ENCODE measurements at regions of chr17 and their contacts with region 1.

Region 1: GRCh38 chr17:7589204-7589868 is 558 bp downstream of the SOX15 start:
- DNase-seq: peak; percentile 71
- H3K4me3 Mint-ChIP-seq: no peak overlapping the region
- H3K27ac Mint-ChIP-seq: peak overlapping the region; percentile 26
- H3K4me1 Mint-ChIP-seq: peaks cover 22% of the 10 kb centered on the region
- H3K27me3 Mint-ChIP-seq: no peaks in the 10 kb centered on the region

Region 2: DNA sequence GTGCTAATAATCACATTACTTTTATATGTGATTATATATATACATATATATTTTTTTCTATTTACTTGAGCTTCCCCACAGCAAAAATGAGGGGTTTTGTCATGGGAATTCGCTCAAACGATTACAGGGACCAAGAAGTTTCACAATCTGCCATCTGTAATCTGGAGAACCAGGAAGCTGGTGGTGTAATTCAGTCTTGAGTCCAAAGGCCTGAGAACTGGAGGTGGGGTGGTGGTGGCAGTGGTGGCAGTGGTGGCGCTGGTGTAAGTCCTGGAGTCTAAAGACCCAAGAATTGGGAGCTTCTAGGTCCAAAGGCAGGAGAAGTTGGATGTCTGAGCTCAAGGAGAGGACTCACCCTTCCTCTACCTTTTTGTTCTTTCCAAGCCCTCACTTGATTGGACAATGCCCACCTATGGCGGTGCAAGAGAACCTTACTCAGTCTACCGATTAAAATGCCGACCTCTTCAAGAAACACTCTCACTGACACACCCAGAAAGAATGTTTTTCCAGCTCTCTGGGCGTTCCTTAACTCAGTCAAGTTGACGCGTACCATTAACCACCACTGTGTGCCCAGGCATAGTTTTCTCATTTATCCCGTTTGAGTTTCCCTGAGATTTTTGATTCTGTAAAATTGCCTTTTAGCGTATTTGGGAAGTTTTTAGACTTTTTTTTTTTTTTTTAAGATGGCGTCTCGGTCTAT is 73.3 kb before region 1 on chr17:
- CTCF ChIA-PET with region 1: interaction called, 24 read pairs
- POLR2A ChIA-PET with region 1: interaction called, 3 read pairs
- DNase-seq: no peak
- H3K4me3 Mint-ChIP-seq: no peak overlapping the region
- H3K27ac Mint-ChIP-seq: no peak overlapping the region
- H3K4me1 Mint-ChIP-seq: no peaks in the 10 kb centered on the region
- H3K27me3 Mint-ChIP-seq: no peaks in the 10 kb centered on the region

Region 3: DNA sequence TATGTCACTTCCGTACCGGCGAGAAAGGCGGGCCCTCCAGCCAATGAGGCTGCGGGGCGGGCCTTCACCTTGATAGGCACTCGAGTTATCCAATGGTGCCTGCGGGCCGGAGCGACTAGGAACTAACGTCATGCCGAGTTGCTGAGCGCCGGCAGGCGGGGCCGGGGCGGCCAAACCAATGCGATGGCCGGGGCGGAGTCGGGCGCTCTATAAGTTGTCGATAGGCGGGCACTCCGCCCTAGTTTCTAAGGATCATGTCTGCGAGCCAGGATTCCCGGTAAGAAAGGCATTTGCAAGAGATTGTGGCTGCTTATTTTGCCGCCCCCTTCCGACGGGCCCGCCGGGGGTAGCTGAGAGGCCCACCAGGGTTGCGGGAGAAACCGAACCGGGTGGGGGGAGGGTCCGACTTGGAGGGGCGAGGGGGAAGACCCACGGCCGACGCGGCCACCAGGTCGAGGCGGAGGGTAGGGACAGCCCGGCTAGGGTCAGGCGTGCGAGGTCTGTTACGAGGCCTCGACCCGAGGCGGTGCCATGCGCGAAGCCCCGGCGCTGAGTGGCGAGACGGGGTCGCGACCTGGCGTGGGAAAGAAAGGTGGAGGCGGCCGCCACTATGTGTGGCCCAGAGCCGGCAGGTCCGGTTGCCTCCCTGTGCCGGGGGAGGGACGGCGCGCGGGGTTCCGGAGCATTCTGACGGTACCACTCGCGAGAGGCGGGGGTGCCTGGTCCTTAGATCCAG is 16.6 kb before region 1 on chr17:
- CTCF ChIA-PET with region 1: interaction called, 13 read pairs
- POLR2A ChIA-PET with region 1: interaction called, 169 read pairs
- DNase-seq: peak; percentile 100
- H3K4me3 Mint-ChIP-seq: peak overlapping the region; percentile 93
- H3K27ac Mint-ChIP-seq: peak overlapping the region; percentile 99
- H3K4me1 Mint-ChIP-seq: peaks cover 63% of the 10 kb centered on the region
- H3K27me3 Mint-ChIP-seq: no peaks in the 10 kb centered on the region

Region 4: DNA sequence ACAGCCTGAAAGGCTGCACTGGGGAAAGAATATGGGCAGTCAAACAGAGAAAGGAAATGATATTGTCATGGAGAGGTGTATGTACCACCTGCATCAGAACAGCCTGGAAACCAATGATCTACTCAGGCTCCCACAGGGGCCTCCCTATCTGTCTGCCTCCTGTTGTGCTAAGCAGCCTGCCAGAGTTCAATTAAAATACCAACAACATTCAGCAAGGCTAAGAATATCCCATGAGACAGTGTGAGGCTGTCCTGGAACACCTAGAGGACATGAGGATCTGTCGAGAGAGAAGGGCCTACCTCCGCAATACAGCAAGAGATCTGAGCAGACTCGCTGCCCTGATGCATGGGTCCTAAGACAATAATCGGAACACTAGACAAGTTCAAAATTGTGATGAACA is 16.9 kb after region 1 on chr17:
- CTCF ChIA-PET with region 1: interaction called, 10 read pairs
- POLR2A ChIA-PET with region 1: interaction called, 8 read pairs
- DNase-seq: no peak
- H3K4me3 Mint-ChIP-seq: no peak overlapping the region
- H3K27ac Mint-ChIP-seq: no peak overlapping the region
- H3K4me1 Mint-ChIP-seq: peaks cover 5% of the 10 kb centered on the region
- H3K27me3 Mint-ChIP-seq: no peaks in the 10 kb centered on the region

Region 5: GRCh38 chr17:7650509-7651096 is 61.3 kb after region 1 on chr17 and contains the start of gene ATP1B2:
- CTCF ChIA-PET with region 1: no interaction called
- POLR2A ChIA-PET with region 1: no interaction called
- DNase-seq: peak; percentile 75
- H3K4me3 Mint-ChIP-seq: peak within 1 kb of the TSS; percentile 63
- H3K27ac Mint-ChIP-seq: no peak within 1 kb of the TSS
- H3K4me1 Mint-ChIP-seq: peaks cover 17% of the 10 kb centered on the region
- H3K27me3 Mint-ChIP-seq: peaks cover 53% of the 10 kb centered on the region
- total RNA-seq, gene ATP1B2: 0.25 to 0.50 TPM